Ovary (tissue), 10 donors: ENCODE measurements at regions of chr5 and their contacts with region 1.

Region 1: DNA sequence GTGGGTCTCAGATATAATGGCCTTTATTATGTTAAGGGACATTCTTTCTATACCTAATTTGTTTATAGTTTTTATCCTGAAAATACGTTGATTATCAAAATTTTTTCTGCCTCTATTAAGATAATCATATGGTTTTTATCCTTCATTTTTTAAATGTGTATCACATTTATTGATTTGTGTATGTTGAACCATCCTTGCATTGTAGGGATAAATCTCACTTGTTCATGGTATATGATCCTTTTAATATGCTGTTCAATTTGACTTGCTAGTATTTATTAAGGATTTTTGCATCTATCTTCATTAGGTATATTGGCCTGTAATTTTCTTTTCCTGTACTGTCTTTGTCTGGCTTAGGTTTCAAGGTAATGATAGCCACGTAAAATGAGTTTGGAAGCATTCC is 25.5 kb downstream of the PKD2L2 start:
- DNase-seq: no peak
- H3K4me3 ChIP-seq: no peak overlapping the region
- H3K27ac ChIP-seq: no peak overlapping the region
- H3K4me1 ChIP-seq: no peaks in the 10 kb centered on the region
- H3K27me3 ChIP-seq: no peaks in the 10 kb centered on the region
- CTCF ChIP-seq: no peak
- EP300 ChIP-seq: no peak
- POLR2A ChIP-seq: no peak

Region 2: DNA sequence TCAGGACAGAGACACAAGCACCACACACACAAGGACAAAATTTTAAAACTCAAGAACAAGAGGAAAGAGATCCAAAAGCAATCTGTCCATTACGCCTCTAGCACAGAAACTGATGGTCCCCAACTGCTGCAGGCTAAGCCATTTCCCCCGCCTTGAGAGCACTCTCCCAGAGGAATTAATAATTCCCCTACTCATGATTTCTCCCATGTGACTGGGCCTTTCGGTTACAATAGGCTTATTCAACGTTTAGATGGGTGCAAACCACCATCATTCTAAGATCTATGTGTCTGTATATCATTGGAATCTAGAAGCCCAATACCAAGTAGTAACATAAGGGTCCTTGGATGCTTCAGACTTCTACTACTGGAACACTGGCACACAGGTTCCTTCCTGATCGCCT is 244.9 kb after region 1 on chr5:
- intact Hi-C with region 1: no loop called
- DNase-seq: no peak
- H3K4me3 ChIP-seq: no peak overlapping the region
- H3K27ac ChIP-seq: no peak overlapping the region
- H3K4me1 ChIP-seq: no peaks in the 10 kb centered on the region
- H3K27me3 ChIP-seq: no peaks in the 10 kb centered on the region
- CTCF ChIP-seq: no peak
- EP300 ChIP-seq: no peak
- POLR2A ChIP-seq: no peak

Region 3: GRCh38 chr5:139222335-139222734 is 1307.6 kb after region 1 on chr5:
- intact Hi-C with region 1: loop called in 1 of 4 experiments (anchors 5 kb)
- DNase-seq: no peak
- H3K4me3 ChIP-seq: no peak overlapping the region
- H3K27ac ChIP-seq: no peak overlapping the region
- H3K4me1 ChIP-seq: no peaks in the 10 kb centered on the region
- H3K27me3 ChIP-seq: no peaks in the 10 kb centered on the region
- CTCF ChIP-seq: no peak
- EP300 ChIP-seq: no peak
- POLR2A ChIP-seq: no peak